ENCODE measurements at regions of chr7 and their contacts with region 1.

Region 1: DNA sequence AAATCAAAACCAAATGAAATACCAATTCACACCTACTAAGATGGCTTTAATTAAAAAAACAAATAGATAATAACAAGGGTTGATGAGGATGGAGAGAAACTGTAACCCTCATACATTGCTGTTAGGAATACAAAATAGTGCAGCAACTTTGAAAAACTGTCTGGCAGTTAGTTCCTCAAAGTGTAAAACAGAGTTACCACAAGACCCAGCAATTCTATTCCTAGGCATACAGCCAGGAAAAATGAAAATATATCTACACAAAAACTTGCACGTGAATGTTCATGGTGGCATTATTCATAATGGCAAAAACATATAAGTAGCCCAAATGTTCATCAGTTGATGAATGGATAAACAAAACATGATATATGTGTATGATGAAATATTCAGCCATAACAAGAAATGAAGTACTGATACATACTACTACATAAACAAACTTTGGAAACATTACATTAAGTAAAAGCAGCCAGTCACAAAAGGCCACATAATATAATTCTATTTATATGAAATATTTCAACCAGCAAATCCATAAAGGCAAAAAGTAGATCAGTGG is 83.5 kb downstream of the BRAF start:
- DNase-seq: no peak
- H3K4me3 ChIP-seq: no peak overlapping the region
- H3K27ac ChIP-seq: no peak overlapping the region
- H3K4me1 ChIP-seq: no peaks in the 10 kb centered on the region
- H3K27me3 ChIP-seq: no peaks in the 10 kb centered on the region
- CTCF ChIP-seq: no peak
- EP300 ChIP-seq: no peak
- POLR2A ChIP-seq: no peak

Region 2: DNA sequence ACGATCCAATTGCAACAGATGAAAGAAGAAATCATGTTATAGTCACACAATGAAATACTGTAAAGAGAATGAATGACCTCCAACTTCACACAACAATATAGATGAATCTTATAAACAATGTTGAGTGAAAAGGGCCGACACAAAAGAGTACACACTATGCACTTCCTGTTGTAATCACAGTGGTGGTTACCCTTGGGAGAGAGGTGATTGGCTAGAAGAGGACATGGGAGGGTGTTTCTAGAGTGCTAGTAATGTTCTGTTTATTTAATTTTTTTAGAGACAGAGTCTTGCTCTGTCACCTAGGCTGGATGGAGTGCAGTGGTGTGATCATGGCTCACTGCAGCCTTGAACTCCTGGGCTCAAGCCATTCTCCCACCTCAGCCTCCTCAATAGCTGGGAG is 62.3 kb before region 1 on chr7:
- intact Hi-C with region 1: loop called (anchors 2 kb)
- DNase-seq: no peak
- H3K4me3 ChIP-seq: no peak overlapping the region
- H3K27ac ChIP-seq: no peak overlapping the region
- H3K4me1 ChIP-seq: no peaks in the 10 kb centered on the region
- H3K27me3 ChIP-seq: no peaks in the 10 kb centered on the region
- CTCF ChIP-seq: no peak
- EP300 ChIP-seq: no peak
- POLR2A ChIP-seq: no peak

Region 3: GRCh38 chr7:140876519-140877248 is 35.4 kb after region 1 on chr7:
- intact Hi-C with region 1: no loop called
- DNase-seq: no peak
- H3K4me3 ChIP-seq: no peak overlapping the region
- H3K27ac ChIP-seq: no peak overlapping the region
- H3K4me1 ChIP-seq: peaks cover 0 to 30% (median 11%) of the 10 kb centered on the region in 4 donors
- H3K27me3 ChIP-seq: no peaks in the 10 kb centered on the region
- CTCF ChIP-seq: no peak
- EP300 ChIP-seq: no peak
- POLR2A ChIP-seq: no peak

Measured in sigmoid colon (tissue), 7 donors.